ENCODE measurements at regions of chr7 and their contacts with region 1.

Region 1: GRCh38 chr7:28179120-28180030 is 1.2 kb downstream of the JAZF1 start:
- DNase-seq: peak; percentile 91

Region 2: DNA sequence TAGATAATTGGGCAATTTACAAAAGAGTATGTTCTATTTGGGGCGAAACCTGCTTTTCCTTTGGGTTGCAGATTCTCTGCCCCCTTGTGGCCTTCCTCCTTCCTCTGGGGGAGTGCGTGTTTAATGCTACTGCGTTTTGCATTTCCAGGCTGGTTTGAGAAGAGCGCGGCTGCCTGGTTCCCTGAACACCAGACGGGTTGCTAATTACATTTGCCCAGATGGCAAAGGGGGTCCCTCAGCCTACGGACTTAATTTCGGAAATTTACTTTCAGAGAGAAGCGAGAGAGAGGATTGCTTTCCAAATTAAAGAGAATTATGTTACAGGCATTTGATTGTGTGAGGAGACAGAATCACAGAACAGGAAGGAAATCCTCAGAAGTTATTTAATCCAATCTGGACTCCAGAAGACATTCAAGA is 93.1 kb after region 1 on chr7:
- intact Hi-C with region 1: loop called in 1 of 2 experiments (anchors 10 kb)
- DNase-seq: no peak